Body of pancreas (tissue), 4 donors: ENCODE measurements at regions of chr9 and their contacts with region 1.

Region 1: DNA sequence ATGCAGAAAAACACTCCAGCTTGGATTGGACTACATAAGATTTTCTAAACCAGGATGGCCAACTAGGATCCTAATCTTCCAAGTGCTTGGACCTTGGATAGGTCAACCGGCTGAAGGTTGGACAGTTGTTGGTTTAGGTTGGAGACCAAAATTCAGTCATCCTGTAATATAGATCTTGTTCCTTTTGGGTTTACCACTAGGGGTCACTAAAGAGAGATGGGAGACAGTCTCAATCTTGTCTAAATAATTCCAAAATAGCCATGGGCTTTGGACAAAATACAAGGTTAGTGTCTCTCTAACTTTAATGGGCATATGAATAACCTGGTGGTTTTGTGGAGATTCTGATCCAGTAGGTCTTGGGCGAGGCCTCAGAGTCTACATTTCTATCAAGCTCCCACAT is 148.7 kb upstream of the ERCC6L2 start:
- DNase-seq: no peak
- ATAC-seq: peak; percentile 68
- H3K4me3 ChIP-seq: no peak overlapping the region
- H3K27ac ChIP-seq: no peak overlapping the region
- H3K4me1 ChIP-seq: no peaks in the 10 kb centered on the region
- H3K27me3 ChIP-seq: no peaks in the 10 kb centered on the region
- CTCF ChIP-seq: peak; percentile 62 to 71 (median 69)
- POLR2A ChIP-seq: no peak

Region 2: DNA sequence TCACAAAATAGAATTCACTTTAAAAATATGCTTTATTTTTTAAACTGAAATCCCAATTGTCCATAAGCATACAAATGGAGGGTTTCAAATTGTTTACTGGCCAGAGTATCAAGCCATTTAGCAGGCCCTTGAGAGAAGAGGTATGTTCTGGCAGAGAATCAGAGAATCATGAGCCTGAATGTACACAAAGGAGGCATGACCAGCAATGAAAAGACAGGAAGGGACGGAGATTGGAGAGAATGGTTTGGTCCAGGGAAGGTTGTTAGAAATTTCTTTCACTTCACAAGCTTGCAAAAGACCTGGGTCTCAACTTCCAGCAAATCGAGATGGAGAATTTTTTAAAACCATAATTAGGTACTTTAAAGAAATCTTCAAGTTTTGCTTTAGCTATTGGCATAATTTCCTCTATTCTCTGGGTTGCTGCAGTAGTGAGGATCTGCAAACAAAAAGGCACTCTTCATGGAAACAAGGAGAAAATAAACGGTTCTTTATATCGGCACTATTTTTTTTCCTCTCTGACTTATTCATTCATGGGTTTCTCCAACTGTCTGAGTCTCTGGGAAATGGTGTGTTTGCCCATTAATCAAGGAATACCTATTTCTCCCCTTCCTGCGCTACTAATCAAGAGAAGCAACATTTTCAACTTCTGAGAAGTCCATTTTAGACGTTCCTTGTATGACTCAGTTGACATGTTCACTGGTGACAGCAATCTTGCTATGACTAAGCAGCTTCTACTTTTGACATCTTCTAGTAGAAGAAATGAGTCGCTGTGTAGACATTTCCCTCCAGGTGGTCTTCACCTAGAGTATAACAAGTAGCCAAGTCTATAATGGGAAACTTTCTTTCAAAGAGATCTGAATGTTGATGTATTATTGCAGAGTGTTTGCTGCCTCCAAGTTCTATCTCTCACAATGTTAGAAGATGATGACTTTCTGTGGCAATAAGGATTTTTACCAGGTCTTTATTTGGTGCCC is 125.6 kb after region 1 on chr9:
- intact Hi-C with region 1: no loop called
- DNase-seq: no peak
- ATAC-seq: no peak
- H3K4me3 ChIP-seq: no peak overlapping the region
- H3K27ac ChIP-seq: no peak overlapping the region
- H3K4me1 ChIP-seq: no peaks in the 10 kb centered on the region
- H3K27me3 ChIP-seq: no peaks in the 10 kb centered on the region
- CTCF ChIP-seq: no peak
- POLR2A ChIP-seq: no peak

Region 3: DNA sequence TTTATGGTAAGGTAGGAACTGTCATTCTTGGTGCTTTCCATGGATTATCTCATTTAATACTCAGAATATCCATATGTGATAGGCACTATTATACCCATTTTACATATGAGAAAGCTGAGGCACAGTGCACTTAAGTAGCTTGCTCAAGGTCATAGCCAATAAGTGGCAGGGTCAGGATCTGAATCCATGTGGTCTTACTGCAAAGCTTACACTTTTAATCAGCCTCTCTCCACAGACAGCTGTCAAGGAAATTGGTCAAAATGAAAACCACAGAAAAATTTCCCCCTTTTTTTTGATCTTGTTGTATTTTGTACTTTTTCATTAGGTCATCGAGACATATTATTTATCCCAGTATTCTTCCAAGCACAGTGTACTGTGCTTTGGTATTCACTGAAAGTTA is 227.2 kb after region 1 on chr9:
- intact Hi-C with region 1: no loop called
- DNase-seq: no peak
- ATAC-seq: no peak
- H3K4me3 ChIP-seq: no peak overlapping the region
- H3K27ac ChIP-seq: no peak overlapping the region
- H3K4me1 ChIP-seq: no peaks in the 10 kb centered on the region
- H3K27me3 ChIP-seq: no peaks in the 10 kb centered on the region
- CTCF ChIP-seq: no peak
- POLR2A ChIP-seq: no peak

Region 4: GRCh38 chr9:96217754-96218693 is 491.3 kb after region 1 on chr9:
- intact Hi-C with region 1: loop called (anchors 10 kb)
- DNase-seq: peak; percentile 71 to 86 (median 80)
- ATAC-seq: peak; percentile 92
- H3K4me3 ChIP-seq: no peak overlapping the region
- H3K27ac ChIP-seq: peak overlapping the region in 3 of 4 donors; percentile 38 to 69 (median 59)
- H3K4me1 ChIP-seq: peaks cover 27% of the 10 kb centered on the region
- H3K27me3 ChIP-seq: no peaks in the 10 kb centered on the region
- CTCF ChIP-seq: peak; percentile 95 to 99 (median 99)
- POLR2A ChIP-seq: peak in 1 of 3 donors; percentile 34